Psoas muscle (tissue), 8 donors: ENCODE measurements at regions of chr5 and their contacts with region 1.

Region 1: GRCh38 chr5:108339232-108339631 is 42.7 kb downstream of the FBXL17 start:
- DNase-seq: no peak
- ATAC-seq: peak in 2 of 4 donors; percentile 35 to 61
- H3K4me3 ChIP-seq: no peak overlapping the region
- H3K27ac ChIP-seq: no peak overlapping the region
- H3K4me1 ChIP-seq: peaks cover 22% of the 10 kb centered on the region
- H3K27me3 ChIP-seq: no peaks in the 10 kb centered on the region
- CTCF ChIP-seq: no peak

Region 2: DNA sequence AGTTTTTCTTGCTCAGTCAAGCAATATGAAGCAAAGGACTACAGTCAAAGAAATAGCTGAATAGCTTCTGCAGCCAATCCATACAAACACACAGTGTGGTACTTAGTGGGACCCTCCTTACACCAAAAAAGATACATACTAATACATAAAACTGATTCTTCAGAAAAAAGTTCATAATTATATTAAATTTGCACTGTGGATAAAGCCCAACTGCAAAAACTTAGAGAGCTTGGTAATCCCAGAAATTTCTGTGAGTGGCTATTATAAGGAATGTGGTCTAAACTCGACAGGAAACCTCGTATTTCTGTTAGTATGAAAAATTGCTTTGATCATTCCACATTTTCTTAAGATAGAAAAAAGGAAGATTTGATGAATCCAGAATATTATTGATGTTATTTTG is 202.7 kb before region 1 on chr5:
- intact Hi-C with region 1: loop called in 1 of 2 experiments (anchors 10 kb)
- DNase-seq: no peak
- ATAC-seq: no peak
- H3K4me3 ChIP-seq: no peak overlapping the region
- H3K27ac ChIP-seq: no peak overlapping the region
- H3K4me1 ChIP-seq: no peaks in the 10 kb centered on the region
- H3K27me3 ChIP-seq: no peaks in the 10 kb centered on the region
- CTCF ChIP-seq: no peak

Region 3: DNA sequence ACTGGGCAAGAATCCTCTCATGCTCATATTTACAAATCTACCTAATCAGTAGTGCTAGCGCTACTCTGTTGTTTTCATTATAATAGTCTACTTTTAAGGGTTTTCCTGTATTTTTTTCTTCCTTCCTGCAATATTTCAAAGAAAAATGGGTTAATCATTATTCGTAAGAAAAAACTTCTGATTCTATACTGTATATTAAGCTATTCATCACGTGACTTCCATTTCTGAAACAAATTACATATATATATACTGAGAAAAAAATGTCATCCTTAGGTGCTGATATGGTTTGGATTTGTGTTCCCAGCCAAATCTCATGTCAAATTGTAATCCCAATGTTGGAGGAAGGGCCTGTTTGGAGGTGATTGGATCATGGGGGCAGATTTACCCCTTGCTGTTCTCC is 154.3 kb before region 1 on chr5:
- intact Hi-C with region 1: no loop called
- DNase-seq: no peak
- ATAC-seq: no peak
- H3K4me3 ChIP-seq: no peak overlapping the region
- H3K27ac ChIP-seq: no peak overlapping the region
- H3K4me1 ChIP-seq: no peaks in the 10 kb centered on the region
- H3K27me3 ChIP-seq: no peaks in the 10 kb centered on the region
- CTCF ChIP-seq: no peak

Region 4: GRCh38 chr5:108260117-108260857 is 78.9 kb before region 1 on chr5:
- intact Hi-C with region 1: loop called (anchors 2 to 5 kb)
- DNase-seq: peak; percentile 49 to 71
- ATAC-seq: peak; percentile 75 to 94 (median 91)
- H3K4me3 ChIP-seq: peak overlapping the region; percentile 40
- H3K27ac ChIP-seq: no peak overlapping the region
- H3K4me1 ChIP-seq: peaks cover 32% of the 10 kb centered on the region
- H3K27me3 ChIP-seq: no peaks in the 10 kb centered on the region
- CTCF ChIP-seq: peak; percentile 96